ENCODE measurements at regions of chr6 and their contacts with region 1.

Region 1: DNA sequence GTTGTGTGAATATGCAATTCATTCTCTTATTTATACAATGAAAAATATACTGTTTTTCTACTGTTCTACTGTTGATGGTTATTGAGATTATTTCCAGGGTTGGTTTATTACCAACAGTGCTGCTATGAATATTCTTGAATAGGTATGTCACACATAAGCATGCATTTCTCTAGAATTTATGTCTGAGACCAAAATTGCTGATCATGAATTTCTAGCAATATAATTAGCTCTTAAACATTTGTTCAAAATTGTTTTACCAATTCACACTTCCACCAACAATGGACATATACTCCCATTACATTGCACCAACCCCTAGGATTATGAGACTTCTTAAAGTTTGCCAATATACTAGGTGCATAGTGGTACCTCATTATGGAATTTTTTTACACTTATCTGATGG is 164.1 kb upstream of the KCNQ5 start:
- DNase-seq: no peak
- ATAC-seq: no peak

Region 2: DNA sequence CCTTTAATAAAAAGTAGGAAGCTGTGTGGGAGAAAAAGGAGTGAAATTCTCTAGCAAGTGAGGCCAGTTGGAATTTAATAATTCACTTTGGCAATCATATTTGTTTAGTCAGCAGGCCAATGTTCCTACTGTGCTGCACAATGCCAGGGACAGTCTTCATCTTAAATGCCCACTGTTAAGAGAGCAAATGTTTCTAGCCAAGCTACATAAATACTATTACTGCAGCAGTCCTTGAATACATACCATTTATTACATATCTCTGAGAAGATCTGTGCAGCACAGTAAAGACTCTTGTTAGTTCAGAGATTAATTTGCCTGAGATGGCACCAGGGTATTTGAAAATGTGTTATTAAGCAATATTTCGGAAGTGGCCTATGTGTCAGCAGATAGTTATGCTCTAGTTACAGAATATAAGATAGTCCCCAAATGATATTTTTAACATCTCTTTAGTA is 1063.7 kb before region 1 on chr6:
- intact Hi-C with region 1: loop called (anchors 5 kb)
- DNase-seq: no peak
- ATAC-seq: peak; percentile 47

Region 3: GRCh38 chr6:71482742-71483141 is 975.0 kb before region 1 on chr6:
- intact Hi-C with region 1: no loop called
- DNase-seq: no peak
- ATAC-seq: no peak

Measured in sciatic nerve (tissue), 2 donors.